Activated CD4-positive, alpha-beta T cell treated with anti-CD3 and anti-CD28 coated beads for 36 hours (primary cell): ENCODE measurements at regions of chr3 and their contacts with region 1.

Region 1: GRCh38 chr3:18559331-18559842 is 134.2 kb upstream of the SATB1 start:
- DNase-seq: peak; percentile 50
- ATAC-seq: peak; percentile 57
- H3K4me3 Mint-ChIP-seq: peak overlapping the region; percentile 53
- H3K27ac Mint-ChIP-seq: peak overlapping the region; percentile 97
- H3K4me1 Mint-ChIP-seq: peaks cover 74% of the 10 kb centered on the region
- H3K27me3 Mint-ChIP-seq: no peaks in the 10 kb centered on the region

Region 2: DNA sequence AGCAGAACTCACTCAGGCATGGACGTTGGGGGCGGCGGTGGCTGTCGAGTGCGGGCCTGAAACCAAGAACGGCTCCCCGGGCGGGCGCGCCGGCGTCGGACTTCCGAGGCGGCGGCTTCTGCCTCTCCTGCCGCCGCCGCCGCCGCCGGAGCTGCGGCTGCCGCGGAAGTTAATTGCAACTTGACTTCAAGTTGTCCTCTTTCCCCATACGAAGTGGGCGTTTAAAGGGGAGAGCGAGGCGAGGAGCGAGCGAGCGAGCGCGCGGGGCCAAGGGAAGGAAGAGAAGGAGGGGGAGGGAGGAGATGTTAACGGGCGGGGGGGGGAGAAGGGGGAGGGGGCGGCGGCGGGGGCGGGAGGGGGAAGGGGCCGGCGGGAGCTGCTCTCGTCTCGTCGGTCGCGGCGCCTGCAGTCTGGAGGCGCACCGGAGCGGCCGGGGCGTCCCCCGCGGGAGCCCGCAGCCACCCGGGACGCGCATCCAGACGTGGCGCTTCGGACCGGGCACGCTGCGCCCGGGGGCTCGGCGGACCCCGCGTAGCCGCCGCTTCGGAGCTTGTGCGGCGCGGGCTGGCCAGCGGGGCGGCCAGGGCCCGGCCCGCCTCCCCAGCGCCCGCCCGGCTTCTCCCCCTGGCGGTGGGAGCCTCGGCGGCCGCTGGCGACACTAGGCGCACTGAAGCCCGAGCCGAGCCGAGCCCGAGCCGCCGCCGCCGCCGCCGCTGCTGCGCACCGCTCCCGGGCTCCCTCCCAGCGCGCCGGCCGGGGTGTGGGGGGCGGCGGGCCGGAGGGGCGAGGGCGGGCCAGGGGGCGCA is 114.6 kb before region 1 on chr3:
- CTCF ChIA-PET with region 1: interaction called, 4 read pairs
- POLR2A ChIA-PET with region 1: interaction called, 3 read pairs
- intact Hi-C with region 1: loop called (anchors 1 kb)
- DNase-seq: peak; percentile 89
- ATAC-seq: peak; percentile 66
- H3K4me3 Mint-ChIP-seq: peak overlapping the region; percentile 96
- H3K27ac Mint-ChIP-seq: peak overlapping the region; percentile 91
- H3K4me1 Mint-ChIP-seq: peaks cover 25% of the 10 kb centered on the region
- H3K27me3 Mint-ChIP-seq: no peaks in the 10 kb centered on the region

Region 3: GRCh38 chr3:18649666-18650363 is 90.4 kb after region 1 on chr3:
- CTCF ChIA-PET with region 1: interaction called, 13 read pairs
- POLR2A ChIA-PET with region 1: interaction called, 10 read pairs
- intact Hi-C with region 1: loop called (anchors 1 kb)
- DNase-seq: peak; percentile 80
- ATAC-seq: peak; percentile 79
- H3K4me3 Mint-ChIP-seq: peak overlapping the region; percentile 34
- H3K27ac Mint-ChIP-seq: peak overlapping the region; percentile 98
- H3K4me1 Mint-ChIP-seq: peaks cover 84% of the 10 kb centered on the region
- H3K27me3 Mint-ChIP-seq: no peaks in the 10 kb centered on the region

Region 4: GRCh38 chr3:18717598-18717997 is 158.2 kb after region 1 on chr3:
- CTCF ChIA-PET with region 1: interaction called, 5 read pairs
- POLR2A ChIA-PET with region 1: interaction called, 6 read pairs
- intact Hi-C with region 1: loop called (anchors 1 kb)
- DNase-seq: no peak
- ATAC-seq: peak; percentile 38
- H3K4me3 Mint-ChIP-seq: peak overlapping the region; percentile 8
- H3K27ac Mint-ChIP-seq: peak overlapping the region; percentile 97
- H3K4me1 Mint-ChIP-seq: peaks cover 71% of the 10 kb centered on the region
- H3K27me3 Mint-ChIP-seq: no peaks in the 10 kb centered on the region

Region 5: DNA sequence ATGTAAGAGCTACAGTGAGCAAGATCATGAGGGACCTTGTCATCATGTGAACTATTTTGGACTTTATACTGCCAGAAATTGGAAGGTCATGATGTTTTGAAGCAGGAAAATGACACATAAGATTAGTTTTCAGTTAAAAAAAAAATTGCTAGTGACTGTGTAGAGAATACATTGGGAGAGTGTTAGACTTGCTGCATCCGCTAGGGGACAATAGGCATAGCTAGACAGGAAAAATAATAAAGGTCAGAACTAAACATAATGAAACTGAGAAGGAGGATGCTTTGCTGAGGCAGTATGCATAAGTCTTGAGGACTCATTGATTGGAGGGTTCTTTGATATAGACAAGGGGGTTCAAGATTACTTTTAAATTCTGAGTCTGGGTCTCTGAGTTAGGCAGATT is 313.1 kb after region 1 on chr3:
- CTCF ChIA-PET with region 1: no interaction called
- POLR2A ChIA-PET with region 1: no interaction called
- intact Hi-C with region 1: loop called (anchors 1 to 2 kb)
- DNase-seq: no peak
- ATAC-seq: peak; percentile 43
- H3K4me3 Mint-ChIP-seq: no peak overlapping the region
- H3K27ac Mint-ChIP-seq: peak overlapping the region; percentile 20
- H3K4me1 Mint-ChIP-seq: peaks cover 67% of the 10 kb centered on the region
- H3K27me3 Mint-ChIP-seq: peaks cover 2% of the 10 kb centered on the region